GM18951 (cell line): ENCODE measurements at regions of chr9 and their contacts with region 1.

Region 1: DNA sequence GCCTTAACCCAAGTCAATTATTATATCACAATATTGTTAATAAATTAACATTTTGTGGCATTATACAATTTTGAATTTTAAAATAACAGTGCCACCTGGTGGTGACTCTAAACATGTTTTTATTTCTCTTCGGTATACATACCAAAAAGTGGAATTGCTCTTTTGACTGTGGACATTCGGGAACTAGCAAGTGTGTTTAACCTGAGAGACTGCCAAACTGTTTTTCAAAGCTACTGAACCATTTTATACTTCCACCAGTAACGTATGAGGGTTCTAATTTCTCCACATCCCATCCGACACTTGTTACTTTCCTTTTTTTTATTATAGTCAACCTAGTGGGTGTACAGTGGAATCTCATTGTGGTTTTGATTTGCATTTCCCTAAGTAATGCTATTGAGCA is 18.3 kb upstream of the HSDL2 start:
- POLR2A ChIP-seq: no peak

Region 2: GRCh38 chr9:111759762-111760639 is 601.6 kb before region 1 on chr9:
- in situ Hi-C with region 1: loop called (anchors 10 kb)
- POLR2A ChIP-seq: no peak

Region 3: DNA sequence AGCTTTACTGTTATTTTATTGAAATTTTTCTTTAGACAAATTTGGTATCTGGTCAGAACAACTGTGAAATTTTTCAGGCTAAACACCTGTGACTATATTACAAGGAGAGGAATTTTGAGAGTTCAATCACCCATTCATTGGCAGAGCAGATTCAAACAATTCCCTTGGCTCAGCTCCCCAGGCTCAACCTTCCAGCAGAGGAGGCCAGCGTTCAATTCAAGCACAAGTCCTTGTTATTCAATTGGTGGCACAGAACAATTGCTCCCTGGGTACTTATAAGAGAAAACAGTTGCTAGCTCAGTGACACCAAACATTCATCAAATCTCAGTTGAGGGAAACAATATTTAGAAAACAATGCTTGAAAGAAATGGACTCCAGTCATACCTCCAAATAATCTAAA is 269.8 kb before region 1 on chr9:
- in situ Hi-C with region 1: loop called (anchors 5 kb)
- POLR2A ChIP-seq: no peak

Region 4: GRCh38 chr9:112462855-112463254 is 101.3 kb after region 1 on chr9:
- in situ Hi-C with region 1: no loop called
- POLR2A ChIP-seq: no peak

Region 5: DNA sequence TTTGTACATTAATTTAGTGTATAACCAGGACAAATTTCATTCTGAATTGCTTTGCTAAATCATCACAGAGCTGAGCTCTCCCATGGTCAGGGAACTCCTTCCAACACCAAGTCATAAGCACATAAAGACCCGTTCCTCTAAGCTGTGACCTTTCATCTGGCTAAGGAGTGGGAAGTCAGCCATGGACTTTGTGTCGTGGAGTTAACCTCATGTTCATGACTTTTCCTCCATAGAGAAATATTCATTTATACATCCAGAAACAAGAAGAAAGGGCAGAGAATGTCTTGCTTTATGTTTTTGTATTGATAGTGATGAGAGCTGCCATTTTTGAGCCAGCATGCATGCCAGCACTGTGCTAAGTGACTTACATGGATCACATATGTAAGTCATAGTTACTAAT is 258.8 kb after region 1 on chr9:
- in situ Hi-C with region 1: no loop called
- POLR2A ChIP-seq: no peak